ENCODE measurements at regions of chr2 and their contacts with region 1.

Region 1: GRCh38 chr2:212520340-212520739 is 18.3 kb downstream of the ERBB4 start:
- DNase-seq: peak; percentile 21
- ATAC-seq: peak; percentile 66; the same call in 2 of the 3 replicates
- H3K4me3 ChIP-seq: no peak overlapping the region
- H3K27ac ChIP-seq: no peak overlapping the region
- H3K4me1 ChIP-seq: no peaks in the 10 kb centered on the region
- H3K27me3 ChIP-seq: no peaks in the 10 kb centered on the region
- CTCF ChIP-seq: peak; percentile 52
- EP300 ChIP-seq: no peak
- POLR2A ChIP-seq: no peak
- RAD21 ChIP-seq: no peak

Region 2: GRCh38 chr2:212147921-212148513 is 372.3 kb before region 1 on chr2:
- CTCF ChIA-PET with region 1: interaction called, 6 read pairs
- POLR2A ChIA-PET with region 1: no interaction called
- in situ Hi-C with region 1: no loop called
- intact Hi-C with region 1: loop called (anchors 1 kb)
- DNase-seq: peak; percentile 12
- ATAC-seq: no peak
- H3K4me3 ChIP-seq: no peak overlapping the region
- H3K27ac ChIP-seq: no peak overlapping the region
- H3K4me1 ChIP-seq: no peaks in the 10 kb centered on the region
- H3K27me3 ChIP-seq: no peaks in the 10 kb centered on the region
- CTCF ChIP-seq: peak; percentile 37
- EP300 ChIP-seq: no peak
- POLR2A ChIP-seq: no peak
- RAD21 ChIP-seq: no peak

Region 3: DNA sequence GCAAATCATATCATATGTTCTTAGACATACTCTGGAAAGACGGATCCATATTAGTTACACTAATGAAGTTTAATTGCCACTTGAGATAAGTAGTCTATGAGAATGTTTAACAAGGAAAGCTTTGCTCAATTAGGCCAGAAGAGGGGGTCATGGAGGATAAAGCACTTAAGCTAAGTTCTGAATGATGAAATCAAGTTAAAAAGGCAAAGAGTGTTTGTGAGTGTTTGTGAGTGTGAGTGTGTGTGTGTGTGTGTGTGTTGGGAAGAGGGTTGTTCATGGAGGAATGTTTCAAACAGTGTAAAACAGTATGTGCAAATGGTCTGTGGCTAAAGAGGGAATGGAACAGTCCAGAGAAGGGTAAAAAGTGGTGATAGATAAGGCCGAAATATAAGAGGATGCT is 342.6 kb before region 1 on chr2:
- CTCF ChIA-PET with region 1: no interaction called
- POLR2A ChIA-PET with region 1: no interaction called
- in situ Hi-C with region 1: no loop called
- intact Hi-C with region 1: loop called (anchors 1 kb)
- DNase-seq: peak; percentile 3
- ATAC-seq: no peak
- H3K4me3 ChIP-seq: no peak overlapping the region
- H3K27ac ChIP-seq: no peak overlapping the region
- H3K4me1 ChIP-seq: no peaks in the 10 kb centered on the region
- H3K27me3 ChIP-seq: no peaks in the 10 kb centered on the region
- CTCF ChIP-seq: peak; percentile 13; the same call in 1 of the 2 replicates
- EP300 ChIP-seq: no peak
- POLR2A ChIP-seq: no peak
- RAD21 ChIP-seq: no peak

Region 4: GRCh38 chr2:212402315-212402714 is 118.0 kb before region 1 on chr2:
- CTCF ChIA-PET with region 1: no interaction called
- POLR2A ChIA-PET with region 1: no interaction called
- in situ Hi-C with region 1: no loop called
- intact Hi-C with region 1: loop called (anchors 1 kb)
- DNase-seq: no peak
- ATAC-seq: no peak
- H3K4me3 ChIP-seq: no peak overlapping the region
- H3K27ac ChIP-seq: no peak overlapping the region
- H3K4me1 ChIP-seq: peaks cover 6% of the 10 kb centered on the region
- H3K27me3 ChIP-seq: no peaks in the 10 kb centered on the region
- CTCF ChIP-seq: no peak
- EP300 ChIP-seq: no peak
- POLR2A ChIP-seq: no peak
- RAD21 ChIP-seq: no peak

Region 5: DNA sequence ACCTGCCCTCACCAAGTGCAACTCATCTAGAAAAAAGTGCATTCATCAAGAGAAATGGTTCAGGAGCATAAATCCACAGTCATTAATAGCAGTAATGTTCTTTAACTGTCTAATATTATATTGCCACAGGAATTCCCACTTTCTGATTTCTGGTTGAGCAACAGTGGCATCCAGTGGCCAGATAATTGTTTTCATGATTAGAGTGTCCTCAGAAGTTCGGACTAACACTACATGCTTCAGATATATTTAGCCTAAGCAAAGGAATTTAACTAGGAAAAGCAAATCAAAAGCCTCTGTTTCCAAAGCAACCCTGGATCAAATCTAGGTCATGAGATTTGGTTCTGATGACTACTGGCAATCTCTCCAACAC is 28.1 kb after region 1 on chr2:
- CTCF ChIA-PET with region 1: no interaction called
- POLR2A ChIA-PET with region 1: no interaction called
- in situ Hi-C with region 1: no loop called
- intact Hi-C with region 1: no loop called
- DNase-seq: peak; percentile 42
- ATAC-seq: peak; percentile 79
- H3K4me3 ChIP-seq: no peak overlapping the region
- H3K27ac ChIP-seq: no peak overlapping the region
- H3K4me1 ChIP-seq: no peaks in the 10 kb centered on the region
- H3K27me3 ChIP-seq: no peaks in the 10 kb centered on the region
- CTCF ChIP-seq: peak; percentile 61
- EP300 ChIP-seq: no peak
- POLR2A ChIP-seq: no peak
- RAD21 ChIP-seq: no peak